ENCODE measurements at regions of chr20 and their contacts with region 1.

Region 1: DNA sequence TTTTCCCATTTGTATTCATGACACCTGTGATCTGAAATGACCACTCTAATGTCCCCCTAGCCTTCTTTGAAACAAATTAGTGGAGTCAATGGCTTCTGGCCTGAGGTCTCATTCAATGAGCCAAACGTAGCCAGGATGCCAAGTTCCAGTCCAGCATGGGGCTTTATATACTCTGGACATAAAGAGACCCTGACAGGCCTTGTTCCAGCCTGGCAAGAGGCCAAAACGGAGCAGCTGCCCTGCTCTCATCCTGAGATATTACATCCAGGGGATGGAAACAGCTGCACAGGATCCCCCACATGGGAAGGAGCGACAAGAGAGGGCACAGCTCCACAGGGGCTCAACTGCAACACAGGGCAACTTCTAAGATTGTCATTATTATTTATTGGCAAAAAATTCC is 437.8 kb downstream of the CDH26 start:
- DNase-seq: no peak
- ATAC-seq: no peak
- H3K4me3 ChIP-seq: no peak overlapping the region
- H3K4me3 Mint-ChIP-seq: no peak overlapping the region
- H3K27ac ChIP-seq: no peak overlapping the region
- H3K27ac Mint-ChIP-seq: no peak overlapping the region
- H3K4me1 ChIP-seq: no peaks in the 10 kb centered on the region
- H3K4me1 Mint-ChIP-seq: no peaks in the 10 kb centered on the region
- H3K27me3 ChIP-seq: peaks cover 0 to 3% of the 10 kb centered on the region in 2 experiments
- H3K27me3 Mint-ChIP-seq: no peaks in the 10 kb centered on the region
- CTCF ChIP-seq: no peak

Region 2: DNA sequence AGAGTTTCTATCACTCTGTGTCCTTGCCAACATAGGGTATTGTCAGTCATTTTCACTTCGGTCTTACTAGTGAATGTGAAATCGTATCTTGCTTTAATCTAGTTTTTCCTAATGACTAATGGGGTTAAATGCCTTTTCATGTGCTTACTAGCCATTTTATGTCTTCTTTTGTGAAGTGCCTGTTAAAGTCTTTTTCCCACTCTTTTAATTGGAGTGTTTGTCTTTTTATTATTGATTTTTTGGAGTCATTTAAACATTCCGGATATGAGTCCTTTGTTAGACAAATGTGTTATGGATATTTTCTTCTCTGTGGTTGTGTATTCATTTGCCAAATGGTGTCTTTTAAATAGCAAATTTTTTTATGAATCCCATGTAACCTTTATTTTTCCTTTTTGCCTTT is 243.2 kb before region 1 on chr20:
- CTCF ChIA-PET with region 1: no interaction called
- POLR2A ChIA-PET with region 1: no interaction called
- intact Hi-C with region 1: no loop called
- DNase-seq: no peak
- ATAC-seq: no peak
- H3K4me3 ChIP-seq: no peak overlapping the region
- H3K4me3 Mint-ChIP-seq: no peak overlapping the region
- H3K27ac ChIP-seq: no peak overlapping the region
- H3K27ac Mint-ChIP-seq: no peak overlapping the region
- H3K4me1 ChIP-seq: no peaks in the 10 kb centered on the region
- H3K4me1 Mint-ChIP-seq: no peaks in the 10 kb centered on the region
- H3K27me3 ChIP-seq: no peaks in the 10 kb centered on the region
- H3K27me3 Mint-ChIP-seq: peaks cover 7% of the 10 kb centered on the region
- CTCF ChIP-seq: no peak

Region 3: GRCh38 chr20:60453388-60454246 is 57.6 kb after region 1 on chr20:
- CTCF ChIA-PET with region 1: no interaction called
- POLR2A ChIA-PET with region 1: no interaction called
- intact Hi-C with region 1: loop called in 1 of 2 experiments (anchors 10 kb)
- DNase-seq: no peak
- ATAC-seq: no peak
- H3K4me3 ChIP-seq: no peak overlapping the region
- H3K4me3 Mint-ChIP-seq: no peak overlapping the region
- H3K27ac ChIP-seq: no peak overlapping the region
- H3K27ac Mint-ChIP-seq: no peak overlapping the region
- H3K4me1 ChIP-seq: no peaks in the 10 kb centered on the region
- H3K4me1 Mint-ChIP-seq: no peaks in the 10 kb centered on the region
- H3K27me3 ChIP-seq: peaks cover 0 to 2% of the 10 kb centered on the region in 2 experiments
- H3K27me3 Mint-ChIP-seq: peaks cover 6% of the 10 kb centered on the region
- CTCF ChIP-seq: no peak

Measured in CD4-positive, alpha-beta T cell (primary cell).